ENCODE measurements at regions of chr22 and their contacts with region 1.

Region 1: DNA sequence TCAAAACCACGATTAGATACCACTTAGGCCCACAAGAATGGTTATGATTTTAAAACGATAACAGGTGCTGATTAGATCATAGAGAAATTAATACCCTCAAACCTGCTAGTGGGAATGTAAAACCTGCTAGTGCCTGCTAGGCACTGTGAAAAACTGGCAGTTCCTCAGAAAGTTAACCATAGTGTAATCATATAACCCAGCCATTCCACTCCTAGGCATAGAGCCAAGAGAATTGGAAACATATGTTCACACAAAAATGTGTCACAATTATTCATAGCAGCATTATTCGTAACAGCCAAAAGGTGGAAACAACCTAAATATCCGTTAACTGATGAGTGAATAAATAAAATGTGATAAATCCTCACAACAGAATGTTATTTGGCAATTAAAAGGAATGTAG is 122.2 kb upstream of the SYN3 start:
- DNase-seq: no peak
- H3K4me3 ChIP-seq: no peak overlapping the region
- H3K27ac ChIP-seq: no peak overlapping the region
- H3K4me1 ChIP-seq: no peaks in the 10 kb centered on the region
- H3K27me3 ChIP-seq: no peaks in the 10 kb centered on the region
- CTCF ChIP-seq: no peak
- POLR2A ChIP-seq: no peak

Region 2: DNA sequence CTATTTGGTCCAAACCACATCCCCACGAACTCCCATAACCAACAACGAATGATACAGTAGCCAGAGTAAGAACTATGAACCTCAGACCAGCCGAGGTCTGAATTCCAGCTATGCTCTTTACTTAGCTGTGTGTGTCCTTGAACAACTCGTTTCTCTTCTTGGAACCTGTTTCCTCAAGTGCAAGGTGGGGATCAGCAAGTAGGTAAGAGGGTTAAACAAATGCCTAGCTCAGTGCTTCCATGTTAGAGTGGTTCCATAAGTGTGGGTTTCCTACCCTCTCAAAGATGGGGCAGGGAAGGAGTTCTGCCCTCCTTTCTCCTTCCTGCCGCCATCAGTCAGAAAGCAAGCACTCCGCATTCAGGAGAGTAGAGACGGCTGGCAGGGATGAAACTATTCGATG is 161.3 kb after region 1 on chr22:
- intact Hi-C with region 1: loop called (anchors 5 kb)
- DNase-seq: no peak
- H3K4me3 ChIP-seq: no peak overlapping the region
- H3K27ac ChIP-seq: no peak overlapping the region
- H3K4me1 ChIP-seq: no peaks in the 10 kb centered on the region
- H3K27me3 ChIP-seq: no peaks in the 10 kb centered on the region
- CTCF ChIP-seq: no peak
- POLR2A ChIP-seq: no peak

Region 3: GRCh38 chr22:33639588-33640254 is 459.4 kb after region 1 on chr22:
- intact Hi-C with region 1: no loop called
- DNase-seq: no peak
- H3K4me3 ChIP-seq: no peak overlapping the region
- H3K27ac ChIP-seq: no peak overlapping the region
- H3K4me1 ChIP-seq: no peaks in the 10 kb centered on the region
- H3K27me3 ChIP-seq: no peaks in the 10 kb centered on the region
- CTCF ChIP-seq: no peak
- POLR2A ChIP-seq: no peak

Measured in breast epithelium (tissue), 4 donors.